Endothelial cell of umbilical vein (primary cell): ENCODE measurements at regions of chr12 and their contacts with region 1.

Region 1: DNA sequence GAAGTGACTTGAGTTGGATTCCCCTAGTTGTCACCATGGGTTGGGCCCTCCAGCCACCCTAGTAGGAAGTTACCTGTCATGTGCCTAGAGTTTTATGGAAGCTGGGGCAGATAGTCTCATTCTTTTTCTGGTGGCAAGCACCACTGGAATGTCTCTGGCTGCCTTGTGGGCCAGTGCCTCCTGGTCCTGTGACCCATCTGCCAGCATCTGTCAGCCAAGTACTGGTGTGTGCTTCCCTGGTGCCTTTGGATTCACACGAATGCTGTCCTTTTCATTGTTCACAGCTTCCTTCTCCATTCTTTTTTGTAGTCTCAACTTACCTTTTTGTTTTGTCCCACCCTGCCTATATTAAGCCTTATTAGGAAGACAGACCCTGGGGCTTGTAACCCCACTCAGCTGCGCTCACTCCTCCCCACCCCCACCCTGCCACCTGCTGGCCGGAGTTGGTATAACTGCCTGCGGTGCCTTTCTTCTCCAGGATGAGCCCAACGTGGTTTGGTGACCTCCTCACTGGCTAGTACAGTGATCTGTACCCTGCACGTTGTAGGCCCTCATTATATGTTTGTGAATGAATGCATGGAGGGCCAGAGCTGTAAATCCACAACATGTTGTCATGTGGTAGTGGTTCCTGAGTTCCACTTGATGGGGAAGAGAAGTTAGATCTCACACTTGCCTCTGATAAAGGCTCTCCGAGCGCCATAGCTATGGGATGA is 125.7 kb downstream of the TSPAN9 start:
- DNase-seq: peak; percentile 58
- H3K4me3 ChIP-seq: no peak overlapping the region
- H3K27ac ChIP-seq: no peak overlapping the region
- H3K4me1 ChIP-seq: peaks cover 22% of the 10 kb centered on the region
- H3K27me3 ChIP-seq: peaks cover 2 to 11% of the 10 kb centered on the region in 2 experiments
- CTCF ChIP-seq: peak; percentile 93 to 98
- POLR2A ChIP-seq: no peak

Region 2: DNA sequence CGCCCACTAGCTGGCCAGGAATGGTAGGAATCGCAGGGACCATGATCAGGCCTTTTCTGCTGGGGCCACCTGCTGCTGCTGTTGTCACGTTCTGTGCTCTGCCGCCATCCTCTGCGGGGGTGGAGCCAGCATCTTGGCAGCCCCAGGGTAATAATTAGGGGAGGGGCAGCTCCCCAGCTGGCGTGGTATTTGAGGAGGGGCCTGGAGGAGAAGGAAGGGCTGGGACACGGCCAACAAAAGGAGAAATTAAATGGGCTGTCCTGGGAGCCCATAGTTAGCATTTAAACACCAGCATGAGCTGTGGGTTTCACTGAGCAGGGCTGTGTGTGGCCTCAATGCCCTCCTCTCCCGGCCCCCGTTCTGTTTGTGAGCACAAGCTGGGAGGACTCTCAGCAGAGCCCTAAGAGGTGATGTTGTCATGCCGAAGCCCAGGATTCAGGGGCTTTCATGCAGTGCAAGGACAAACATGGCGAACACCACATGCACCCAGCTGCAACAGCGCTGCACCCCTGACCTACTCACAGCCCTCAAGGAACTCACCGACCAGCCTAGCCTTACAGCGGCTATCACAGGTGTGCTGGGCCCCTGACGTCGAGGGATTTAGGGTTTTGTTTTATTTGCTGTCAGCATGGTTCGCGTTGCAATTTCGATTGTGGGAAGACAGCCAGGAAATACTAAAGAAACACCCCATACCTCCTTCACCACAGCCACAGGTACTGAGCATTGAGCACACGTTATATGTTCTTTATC is 825.8 kb before region 1 on chr12:
- CTCF ChIA-PET with region 1: no interaction called
- POLR2A ChIA-PET with region 1: no interaction called
- dilution Hi-C with region 1: no loop called
- intact Hi-C with region 1: no loop called
- DNase-seq: no peak
- H3K4me3 ChIP-seq: no peak overlapping the region
- H3K27ac ChIP-seq: no peak overlapping the region
- H3K4me1 ChIP-seq: no peaks in the 10 kb centered on the region
- H3K27me3 ChIP-seq: no peaks in the 10 kb centered on the region
- CTCF ChIP-seq: no peak
- POLR2A ChIP-seq: no peak

Region 3: GRCh38 chr12:2794736-2795289 is 408.1 kb before region 1 on chr12 and contains the start of gene FKBP4:
- CTCF ChIA-PET with region 1: no interaction called
- POLR2A ChIA-PET with region 1: no interaction called
- dilution Hi-C with region 1: no loop called
- intact Hi-C with region 1: no loop called
- DNase-seq: peak; percentile 82
- H3K4me3 ChIP-seq: peak within 1 kb of the TSS; percentile 69 to 93 (median 73)
- H3K27ac ChIP-seq: peak within 1 kb of the TSS; percentile 1
- H3K4me1 ChIP-seq: peaks cover 23% of the 10 kb centered on the region
- H3K27me3 ChIP-seq: peaks cover 5 to 7% of the 10 kb centered on the region in 2 experiments
- CTCF ChIP-seq: no peak
- POLR2A ChIP-seq: peak; percentile 76
- total RNA-seq, gene FKBP4: 74.1 and 85.6 TPM in 2 replicates

Region 4: DNA sequence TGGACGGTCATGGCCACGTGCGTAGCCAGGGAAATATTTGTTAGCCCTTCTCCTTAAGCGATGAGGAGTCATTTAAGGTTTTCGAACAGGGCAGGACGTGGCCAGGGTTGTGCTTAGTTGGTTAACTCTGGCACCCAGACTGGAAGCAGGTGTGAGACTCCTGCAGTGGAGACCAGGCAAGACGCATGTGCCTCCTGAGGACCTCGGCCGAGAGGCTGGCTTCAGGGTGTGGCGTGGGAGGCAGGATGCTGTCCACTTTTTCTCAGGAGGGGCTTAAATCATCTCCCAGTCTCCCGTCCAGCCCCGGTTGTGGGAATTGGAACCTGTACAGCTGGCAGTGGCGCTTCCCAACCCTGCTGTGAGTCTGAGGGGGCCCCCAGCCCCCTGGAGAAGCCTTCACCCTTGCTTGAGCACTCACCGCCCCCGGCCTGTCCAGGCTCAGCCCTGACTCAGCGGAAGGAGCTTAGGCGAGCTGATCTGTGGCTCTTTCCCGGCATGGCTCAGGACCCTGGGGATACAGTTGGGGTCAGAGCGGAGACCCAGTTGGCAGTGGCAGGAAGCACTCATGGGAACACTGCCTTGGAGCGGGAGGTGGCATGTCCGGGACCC is 172.0 kb before region 1 on chr12:
- CTCF ChIA-PET with region 1: no interaction called
- POLR2A ChIA-PET with region 1: no interaction called
- dilution Hi-C with region 1: no loop called
- intact Hi-C with region 1: no loop called
- DNase-seq: no peak
- H3K4me3 ChIP-seq: no peak overlapping the region
- H3K27ac ChIP-seq: no peak overlapping the region
- H3K4me1 ChIP-seq: peaks cover 21% of the 10 kb centered on the region
- H3K27me3 ChIP-seq: no peaks in the 10 kb centered on the region
- CTCF ChIP-seq: no peak
- POLR2A ChIP-seq: no peak

Region 5: DNA sequence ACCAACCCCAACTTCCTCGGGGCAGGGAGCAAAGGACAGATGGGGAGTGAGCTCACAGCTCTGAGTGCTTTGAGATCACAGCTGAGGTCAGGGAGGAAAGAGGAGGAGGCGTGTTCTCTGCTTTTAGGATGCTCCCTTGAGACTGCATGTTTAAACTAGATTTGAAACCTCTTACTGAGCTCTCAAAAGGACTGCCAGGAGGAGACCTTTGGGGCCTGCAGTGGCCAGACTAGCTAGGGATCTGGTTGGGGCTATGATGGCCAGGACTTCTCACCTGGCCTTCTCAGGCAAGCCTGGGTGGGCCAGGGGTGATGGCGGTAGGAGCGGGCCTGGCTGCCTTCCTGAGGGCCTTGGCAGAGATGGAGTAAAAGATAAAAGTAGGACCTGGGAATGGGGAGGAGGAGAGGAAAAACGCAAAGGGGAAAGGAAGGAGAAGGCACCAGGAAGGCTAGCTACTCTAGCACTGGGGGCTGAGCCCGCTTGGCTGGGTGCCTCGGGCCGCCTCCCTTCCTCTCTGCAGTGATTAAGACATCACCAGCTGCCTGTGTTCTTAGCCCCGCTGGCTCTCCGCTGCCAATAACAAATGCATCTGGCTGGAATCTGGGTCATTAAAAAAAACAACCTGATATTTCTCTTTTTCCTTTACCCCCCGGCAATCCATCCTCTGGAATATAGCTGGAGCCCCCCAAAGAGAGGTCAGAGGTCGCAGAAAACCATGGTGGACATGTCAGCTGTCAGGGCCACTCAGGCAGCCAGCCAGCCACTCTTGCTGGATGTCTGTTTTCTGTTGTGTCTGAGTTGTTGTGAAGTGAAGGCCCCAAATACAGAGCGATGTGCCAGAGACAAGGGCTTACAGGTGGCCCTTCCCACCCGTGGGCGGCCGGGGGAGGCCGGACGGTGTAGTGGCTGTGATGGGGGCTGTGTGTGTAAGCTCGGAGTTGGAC is 15.6 kb after region 1 on chr12:
- CTCF ChIA-PET with region 1: interaction called, 25 read pairs
- POLR2A ChIA-PET with region 1: no interaction called
- dilution Hi-C with region 1: no loop called
- intact Hi-C with region 1: loop called (anchors 1 kb)
- DNase-seq: peak; percentile 88
- H3K4me3 ChIP-seq: no peak overlapping the region
- H3K27ac ChIP-seq: peak overlapping the region; percentile 65
- H3K4me1 ChIP-seq: peaks cover 29% of the 10 kb centered on the region
- H3K27me3 ChIP-seq: no peaks in the 10 kb centered on the region
- CTCF ChIP-seq: peak in 1 of 2 donors; percentile 4
- POLR2A ChIP-seq: no peak

Region 6: DNA sequence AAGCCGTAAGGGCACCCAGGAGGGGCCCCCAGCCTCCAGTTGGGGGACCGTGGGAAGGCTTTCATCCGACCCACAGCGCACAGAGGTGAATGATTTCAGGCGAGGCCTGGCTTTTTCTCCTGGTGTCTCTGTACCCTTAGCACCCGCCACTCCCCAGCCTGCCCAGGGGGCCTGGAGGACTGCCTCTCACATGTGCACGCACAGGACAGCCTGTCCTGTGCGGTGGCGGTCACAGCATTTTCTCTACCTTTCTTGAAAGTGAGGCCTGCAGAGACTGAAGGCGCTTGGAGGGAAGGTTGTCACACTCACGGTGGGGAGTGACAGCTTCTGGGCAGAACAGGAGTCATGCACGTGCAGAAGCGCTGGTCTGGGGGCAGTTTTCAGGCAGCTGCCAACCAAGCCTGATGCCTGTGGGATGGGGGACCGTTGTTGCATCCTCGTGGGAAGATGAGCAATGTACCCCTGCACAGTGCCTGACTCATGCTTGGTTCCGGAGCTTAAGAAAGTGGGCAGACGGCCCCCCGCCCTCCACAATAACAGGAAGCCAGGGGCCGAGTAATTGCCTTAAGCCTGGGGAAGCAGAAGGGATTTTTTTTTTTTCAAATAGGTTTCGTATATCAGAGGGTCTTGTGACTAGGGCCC is 22.4 kb after region 1 on chr12:
- CTCF ChIA-PET with region 1: interaction called, 7 read pairs
- POLR2A ChIA-PET with region 1: interaction called, 3 read pairs
- dilution Hi-C with region 1: no loop called
- intact Hi-C with region 1: loop called (anchors 2 kb)
- DNase-seq: peak; percentile 94
- H3K4me3 ChIP-seq: peak overlapping the region in 1 of 3 experiments; percentile 8
- H3K27ac ChIP-seq: peak overlapping the region; percentile 96
- H3K4me1 ChIP-seq: peaks cover 17% of the 10 kb centered on the region
- H3K27me3 ChIP-seq: no peaks in the 10 kb centered on the region
- CTCF ChIP-seq: no peak
- POLR2A ChIP-seq: no peak

Region 7: DNA sequence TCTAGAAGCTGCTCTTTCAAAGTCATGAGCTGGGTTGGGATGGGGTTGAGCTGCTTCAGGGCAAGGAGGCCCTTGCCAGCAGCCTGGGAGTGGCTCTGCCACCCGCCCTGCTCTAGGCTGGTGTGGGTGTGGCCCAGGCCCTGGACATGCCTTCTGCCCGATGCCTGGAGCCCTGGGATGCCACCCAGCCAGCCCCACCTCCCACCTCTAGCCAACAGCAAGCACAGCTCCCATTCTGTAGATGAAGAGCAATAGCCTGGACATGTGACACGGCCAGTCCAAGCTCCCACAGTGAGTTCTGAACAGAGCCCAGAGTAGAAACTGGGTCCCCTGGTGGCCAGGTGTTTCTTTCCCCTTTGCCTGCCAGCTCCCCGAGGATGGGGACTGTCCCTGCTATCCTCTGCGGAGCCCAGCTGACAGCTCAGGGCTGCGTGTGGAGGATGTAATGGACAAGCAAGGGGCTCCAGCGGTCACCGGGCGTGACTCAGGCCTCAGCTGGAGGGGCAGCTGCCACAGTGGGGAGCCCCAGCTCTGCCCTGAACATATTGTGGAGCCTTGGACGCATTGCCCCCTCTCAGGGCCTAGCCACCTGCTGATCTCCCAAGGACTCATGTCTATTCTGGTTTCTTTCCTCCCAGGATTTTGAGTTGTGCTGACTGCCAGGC is 39.4 kb after region 1 on chr12:
- CTCF ChIA-PET with region 1: no interaction called
- POLR2A ChIA-PET with region 1: no interaction called
- dilution Hi-C with region 1: no loop called
- intact Hi-C with region 1: no loop called
- DNase-seq: no peak
- H3K4me3 ChIP-seq: no peak overlapping the region
- H3K27ac ChIP-seq: no peak overlapping the region
- H3K4me1 ChIP-seq: peaks cover 5% of the 10 kb centered on the region
- H3K27me3 ChIP-seq: no peaks in the 10 kb centered on the region
- CTCF ChIP-seq: no peak
- POLR2A ChIP-seq: no peak